AG04450 (cell line): ENCODE measurements at regions of chr1 and their contacts with region 1.

Region 1: GRCh38 chr1:205977402-205978014 is 25.7 kb downstream of the RAB7B start:
- DNase-seq: peak; percentile 65
- H3K4me3 ChIP-seq: no peak overlapping the region
- H3K27ac ChIP-seq: no peak overlapping the region
- H3K27me3 ChIP-seq: no peaks in the 10 kb centered on the region
- CTCF ChIP-seq: peak; percentile 98

Region 2: GRCh38 chr1:205711104-205712020 is 266.1 kb before region 1 on chr1:
- CTCF ChIA-PET with region 1: interaction called, 27 read pairs
- POLR2A ChIA-PET with region 1: interaction called, 3 read pairs
- DNase-seq: peak; percentile 66
- H3K4me3 ChIP-seq: no peak overlapping the region
- H3K27ac ChIP-seq: no peak overlapping the region
- H3K27me3 ChIP-seq: no peaks in the 10 kb centered on the region
- CTCF ChIP-seq: peak; percentile 90

Region 3: GRCh38 chr1:205791568-205792180 is 185.8 kb before region 1 on chr1:
- CTCF ChIA-PET with region 1: interaction called, 197 read pairs
- POLR2A ChIA-PET with region 1: interaction called, 5 read pairs
- DNase-seq: no peak
- H3K4me3 ChIP-seq: no peak overlapping the region
- H3K27ac ChIP-seq: no peak overlapping the region
- H3K27me3 ChIP-seq: no peaks in the 10 kb centered on the region
- CTCF ChIP-seq: peak; percentile 90

Region 4: GRCh38 chr1:205870236-205870635 is 107.3 kb before region 1 on chr1:
- CTCF ChIA-PET with region 1: no interaction called
- POLR2A ChIA-PET with region 1: no interaction called
- DNase-seq: no peak
- H3K4me3 ChIP-seq: no peak overlapping the region
- H3K27ac ChIP-seq: no peak overlapping the region
- H3K27me3 ChIP-seq: peaks cover 20% of the 10 kb centered on the region
- CTCF ChIP-seq: no peak

Region 5: DNA sequence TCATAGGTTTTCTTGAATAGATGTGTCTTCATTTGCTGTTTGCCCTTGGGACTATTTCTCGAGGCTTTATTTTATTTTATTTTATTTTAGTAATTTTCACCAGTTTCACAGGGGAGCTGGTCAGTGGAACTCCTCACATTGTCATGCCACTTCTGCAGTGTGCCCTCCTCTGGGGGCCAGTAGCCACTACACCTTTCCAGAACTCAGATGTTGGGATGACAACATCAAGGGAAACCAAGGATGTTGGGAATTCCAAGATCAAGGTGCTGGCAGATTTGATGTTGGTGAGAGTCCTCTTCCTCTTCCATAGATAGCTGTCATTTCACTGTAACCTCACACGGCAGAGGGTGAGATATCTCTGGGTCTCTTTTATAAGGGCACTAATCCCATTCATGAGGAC is 69.7 kb before region 1 on chr1:
- CTCF ChIA-PET with region 1: interaction called, 14 read pairs
- POLR2A ChIA-PET with region 1: no interaction called
- DNase-seq: no peak
- H3K4me3 ChIP-seq: no peak overlapping the region
- H3K27ac ChIP-seq: no peak overlapping the region
- H3K27me3 ChIP-seq: peaks cover 8% of the 10 kb centered on the region
- CTCF ChIP-seq: peak; percentile 67

Region 6: GRCh38 chr1:205950826-205951549 is 26.5 kb before region 1 on chr1:
- CTCF ChIA-PET with region 1: interaction called, 20 read pairs
- POLR2A ChIA-PET with region 1: no interaction called
- DNase-seq: no peak
- H3K4me3 ChIP-seq: no peak overlapping the region
- H3K27ac ChIP-seq: no peak overlapping the region
- H3K27me3 ChIP-seq: peaks cover 46% of the 10 kb centered on the region
- CTCF ChIP-seq: no peak

Region 7: GRCh38 chr1:206001476-206001888 is 24.0 kb after region 1 on chr1:
- CTCF ChIA-PET with region 1: interaction called, 16 read pairs
- POLR2A ChIA-PET with region 1: no interaction called
- DNase-seq: peak; percentile 80
- H3K4me3 ChIP-seq: peak overlapping the region; percentile 50
- H3K27ac ChIP-seq: peak overlapping the region; percentile 84
- H3K27me3 ChIP-seq: no peaks in the 10 kb centered on the region
- CTCF ChIP-seq: no peak